Mammary epithelial cell (primary cell): ENCODE measurements at regions of chr20 and their contacts with region 1.

Region 1: GRCh38 chr20:39880887-39881286 is 808.1 kb downstream of the MAFB start:
- DNase-seq: peak; percentile 62
- H3K4me3 ChIP-seq: no peak overlapping the region
- H3K27ac ChIP-seq: no peak overlapping the region
- H3K4me1 ChIP-seq: peaks cover 12% of the 10 kb centered on the region
- H3K27me3 ChIP-seq: no peaks in the 10 kb centered on the region
- CTCF ChIP-seq: peak; percentile 32 to 61

Region 2: DNA sequence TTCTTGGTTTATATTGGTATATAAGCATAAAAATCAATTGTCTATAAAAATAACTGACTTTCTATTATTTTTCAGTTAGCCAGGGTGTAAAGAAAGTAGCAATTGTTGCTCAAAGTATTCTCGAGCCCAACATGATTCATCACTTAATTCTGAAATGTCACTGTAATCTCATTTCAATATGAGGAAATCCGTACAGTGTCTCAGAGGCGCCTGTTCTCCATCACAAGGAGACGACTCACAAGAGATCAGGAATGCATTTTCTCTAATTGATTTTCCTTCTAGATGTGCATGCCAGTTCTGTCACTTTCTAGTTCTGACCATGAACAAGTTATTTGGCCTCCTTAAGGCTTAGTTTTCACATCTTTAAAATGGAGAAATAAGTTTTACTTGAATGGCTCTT is 55.0 kb after region 1 on chr20:
- CTCF ChIA-PET with region 1: no interaction called
- dilution Hi-C with region 1: loop called (anchors 5 kb)
- in situ Hi-C with region 1: no loop called
- intact Hi-C with region 1: no loop called
- DNase-seq: no peak
- H3K4me3 ChIP-seq: no peak overlapping the region
- H3K27ac ChIP-seq: no peak overlapping the region
- H3K4me1 ChIP-seq: no peaks in the 10 kb centered on the region
- H3K27me3 ChIP-seq: no peaks in the 10 kb centered on the region
- CTCF ChIP-seq: no peak

Region 3: GRCh38 chr20:40390654-40391053 is 509.8 kb after region 1 on chr20:
- CTCF ChIA-PET with region 1: no interaction called
- dilution Hi-C with region 1: no loop called
- in situ Hi-C with region 1: no loop called
- intact Hi-C with region 1: no loop called
- DNase-seq: no peak
- H3K4me3 ChIP-seq: no peak overlapping the region
- H3K27ac ChIP-seq: no peak overlapping the region
- H3K4me1 ChIP-seq: no peaks in the 10 kb centered on the region
- H3K27me3 ChIP-seq: no peaks in the 10 kb centered on the region
- CTCF ChIP-seq: no peak